ENCODE measurements at regions of chr17 and their contacts with region 1.

Region 1: GRCh38 chr17:34361478-34362061 is 1.5 kb downstream of the CCL1 start:
- DNase-seq: peak; percentile 85 to 95
- H3K4me3 ChIP-seq: no peak overlapping the region
- H3K27ac ChIP-seq: no peak overlapping the region
- H3K4me1 ChIP-seq: no peaks in the 10 kb centered on the region
- H3K27me3 ChIP-seq: no peaks in the 10 kb centered on the region
- CTCF ChIP-seq: peak; percentile 97 to 100 (median 100)
- EP300 ChIP-seq: no peak
- POLR2A ChIP-seq: no peak
- RAD21 ChIP-seq: peak; percentile 100

Region 2: GRCh38 chr17:34156741-34157589 is 204.6 kb before region 1 on chr17:
- CTCF ChIA-PET with region 1: interaction called, 65 read pairs
- POLR2A ChIA-PET with region 1: no interaction called
- DNase-seq: peak in 1 of 2 experiments; percentile 79
- H3K4me3 ChIP-seq: peak overlapping the region; percentile 41 to 66 (median 52)
- H3K27ac ChIP-seq: peak overlapping the region; percentile 82
- H3K4me1 ChIP-seq: peaks cover 19 to 40% (median 27%) of the 10 kb centered on the region in 4 experiments
- H3K27me3 ChIP-seq: peaks cover 0 to 15% (median 12%) of the 10 kb centered on the region in 4 experiments; a peak in 3 of 7 replicates
- CTCF ChIP-seq: no peak
- EP300 ChIP-seq: no peak
- POLR2A ChIP-seq: peak in 1 of 2 experiments; percentile 81; a peak in 2 of 3 replicates
- RAD21 ChIP-seq: no peak

Region 3: GRCh38 chr17:34177642-34178041 is 183.9 kb before region 1 on chr17:
- CTCF ChIA-PET with region 1: interaction called, 51 read pairs
- POLR2A ChIA-PET with region 1: no interaction called
- DNase-seq: no peak
- H3K4me3 ChIP-seq: no peak overlapping the region
- H3K27ac ChIP-seq: no peak overlapping the region
- H3K4me1 ChIP-seq: peaks cover 0 to 13% (median 6%) of the 10 kb centered on the region in 4 experiments; a peak in 4 of 7 replicates
- H3K27me3 ChIP-seq: no peaks in the 10 kb centered on the region
- CTCF ChIP-seq: no peak
- EP300 ChIP-seq: no peak
- POLR2A ChIP-seq: no peak
- RAD21 ChIP-seq: no peak

Region 4: DNA sequence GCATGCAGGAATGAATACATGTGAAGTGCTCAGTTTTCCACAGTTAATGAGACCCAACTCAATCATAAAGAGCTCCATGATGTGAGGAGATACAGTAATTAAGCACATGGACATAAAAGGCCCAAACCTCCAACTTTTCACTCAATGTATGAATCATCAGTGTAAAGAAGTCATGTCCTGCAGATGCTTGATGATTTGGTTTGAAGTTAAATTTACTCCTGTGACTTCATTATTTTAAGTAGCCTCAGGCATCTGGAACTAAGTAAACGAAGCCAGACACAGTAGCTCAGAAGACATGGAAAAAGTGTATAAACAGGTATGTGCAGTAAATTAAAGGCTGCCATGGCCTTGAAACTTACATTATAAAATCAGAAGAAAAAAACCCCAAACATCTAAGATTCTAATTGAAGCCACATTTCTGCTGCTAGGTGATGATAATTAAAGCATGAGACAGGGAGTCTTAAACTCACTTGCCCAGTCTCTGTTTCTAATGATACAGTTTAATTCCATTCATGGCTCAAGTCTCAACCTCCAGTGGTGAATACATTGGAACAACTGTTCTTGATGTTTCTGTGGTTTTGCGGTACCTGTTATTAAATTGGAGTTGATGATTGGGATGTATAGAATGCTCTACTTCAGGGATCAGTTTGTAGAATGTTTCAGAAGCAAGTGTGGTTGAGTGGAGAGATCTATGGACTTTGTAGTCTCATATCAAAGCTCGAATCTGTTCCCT is 135.4 kb before region 1 on chr17:
- CTCF ChIA-PET with region 1: interaction called, 13 read pairs
- POLR2A ChIA-PET with region 1: no interaction called
- DNase-seq: no peak
- H3K4me3 ChIP-seq: no peak overlapping the region
- H3K27ac ChIP-seq: no peak overlapping the region
- H3K4me1 ChIP-seq: 0 out of 7 replicates have a peak, but pooled peaks cover 0 to 4% (median 0%) of the 10 kb centered on the region in 4 experiments
- H3K27me3 ChIP-seq: no peaks in the 10 kb centered on the region
- CTCF ChIP-seq: no peak
- EP300 ChIP-seq: no peak
- POLR2A ChIP-seq: no peak
- RAD21 ChIP-seq: no peak

Region 5: GRCh38 chr17:34275881-34276280 is 85.7 kb before region 1 on chr17:
- CTCF ChIA-PET with region 1: interaction called, 11 read pairs
- POLR2A ChIA-PET with region 1: no interaction called
- DNase-seq: no peak
- H3K4me3 ChIP-seq: no peak overlapping the region
- H3K27ac ChIP-seq: no peak overlapping the region
- H3K4me1 ChIP-seq: no peaks in the 10 kb centered on the region; a peak in 1 of 7 replicates
- H3K27me3 ChIP-seq: no peaks in the 10 kb centered on the region
- CTCF ChIP-seq: no peak
- EP300 ChIP-seq: no peak
- POLR2A ChIP-seq: no peak
- RAD21 ChIP-seq: no peak

Region 6: DNA sequence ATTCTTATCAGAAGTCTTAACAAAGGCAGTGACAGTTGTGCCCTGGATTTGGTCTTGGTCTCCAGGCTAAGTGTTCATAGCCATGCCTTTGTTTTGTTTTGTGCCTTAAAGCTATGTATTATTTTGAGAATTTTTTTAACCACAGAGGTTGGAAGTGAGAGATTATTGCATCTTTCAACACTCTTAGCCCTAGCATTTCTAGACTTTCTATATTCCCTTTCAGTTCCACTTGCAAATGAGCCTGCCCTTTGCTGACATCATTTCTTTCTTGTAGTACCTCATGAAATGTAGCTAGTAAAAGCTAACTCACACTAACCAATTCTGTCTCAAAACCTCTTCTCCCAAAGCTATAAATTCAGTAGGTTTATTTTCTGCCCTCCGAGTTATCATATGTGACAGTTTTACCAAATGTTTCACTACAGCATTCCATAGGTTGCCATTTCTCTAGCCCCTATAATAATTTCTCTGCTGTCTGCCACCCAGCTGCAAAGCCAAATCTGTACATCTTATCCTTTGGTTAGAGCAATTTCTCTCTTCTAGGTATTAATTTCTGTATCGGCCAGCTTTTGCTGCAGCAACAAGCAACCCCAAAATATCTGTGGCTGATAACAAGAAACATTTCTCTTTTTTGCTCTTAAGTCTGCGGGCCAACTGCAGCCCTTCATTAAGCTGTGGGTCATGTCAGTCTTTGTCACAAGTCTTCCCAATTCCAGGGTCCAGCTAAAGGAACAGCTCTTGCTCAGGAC is 15.7 kb after region 1 on chr17:
- CTCF ChIA-PET with region 1: interaction called, 37 read pairs
- POLR2A ChIA-PET with region 1: no interaction called
- DNase-seq: no peak
- H3K4me3 ChIP-seq: no peak overlapping the region
- H3K27ac ChIP-seq: no peak overlapping the region
- H3K4me1 ChIP-seq: no peaks in the 10 kb centered on the region
- H3K27me3 ChIP-seq: no peaks in the 10 kb centered on the region
- CTCF ChIP-seq: no peak
- EP300 ChIP-seq: no peak
- POLR2A ChIP-seq: no peak
- RAD21 ChIP-seq: no peak

Region 7: DNA sequence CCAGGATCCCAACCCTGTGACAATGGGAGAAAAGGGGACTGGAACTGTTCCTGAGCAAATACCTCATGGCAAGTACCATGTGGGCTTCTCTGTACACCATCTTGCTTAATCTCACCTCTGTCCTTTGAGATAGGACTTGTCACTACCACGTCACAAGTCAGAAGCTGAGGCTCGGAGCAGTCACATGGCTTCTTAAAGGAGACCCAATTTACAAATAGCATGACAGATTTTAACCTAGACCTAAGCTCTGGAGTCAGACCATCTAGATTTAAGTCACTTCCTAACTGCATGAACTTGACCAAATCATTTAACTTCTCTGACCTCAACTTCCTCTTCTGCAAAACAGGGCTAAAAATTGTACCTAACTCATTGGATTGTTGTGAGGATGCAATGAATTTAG is 37.4 kb after region 1 on chr17:
- CTCF ChIA-PET with region 1: interaction called, 10 read pairs
- POLR2A ChIA-PET with region 1: no interaction called
- DNase-seq: no peak
- H3K4me3 ChIP-seq: no peak overlapping the region
- H3K27ac ChIP-seq: no peak overlapping the region
- H3K4me1 ChIP-seq: peaks cover 0 to 4% (median 0%) of the 10 kb centered on the region in 4 experiments; a peak in 2 of 7 replicates
- H3K27me3 ChIP-seq: no peaks in the 10 kb centered on the region; a peak in 2 of 7 replicates
- CTCF ChIP-seq: no peak
- EP300 ChIP-seq: no peak
- POLR2A ChIP-seq: no peak
- RAD21 ChIP-seq: no peak

Measured in H1 (cell line).